WTC11 (cell line): ENCODE measurements at regions of chr19 and their contacts with region 1.

Region 1: DNA sequence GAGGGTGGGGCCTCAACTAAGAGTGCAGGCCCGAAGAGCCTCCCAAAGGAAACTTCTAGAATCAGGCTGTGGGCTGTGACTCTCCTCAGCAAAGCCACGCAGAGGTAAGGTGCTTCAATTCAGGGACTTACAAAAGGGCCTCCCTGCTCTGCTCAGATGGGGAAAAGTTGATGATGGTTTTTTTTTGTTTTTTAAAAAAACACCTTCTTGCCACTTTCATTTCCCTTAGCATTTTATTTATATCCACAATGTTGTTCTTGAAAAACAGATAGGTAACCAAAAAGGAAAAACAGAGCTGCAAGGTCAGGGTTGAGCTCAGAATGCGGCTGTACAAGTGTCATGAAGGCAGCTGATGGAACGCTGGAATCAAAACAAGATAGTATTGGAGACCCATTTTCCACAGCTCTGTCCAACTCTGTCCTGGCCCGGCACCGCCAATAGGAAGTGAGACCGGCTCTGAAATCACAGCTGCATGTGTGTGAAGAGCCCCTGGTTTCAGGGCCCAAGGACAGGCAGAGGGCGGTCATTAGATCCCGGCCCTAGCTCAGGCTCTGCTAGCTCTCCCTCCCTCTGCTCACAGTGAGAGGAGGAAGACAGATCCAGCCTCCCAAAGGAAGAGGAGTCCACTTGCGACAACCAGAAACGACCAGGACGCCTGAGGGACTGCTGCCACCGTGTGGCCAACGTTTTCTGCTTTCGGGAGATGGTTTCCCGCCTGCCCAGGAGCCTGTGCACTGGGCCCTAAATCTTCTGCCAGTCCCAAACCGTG is 58.3 kb downstream of the KLF2 start:
- DNase-seq: peak; percentile 86
- ATAC-seq: peak; percentile 93
- H3K4me3 Mint-ChIP-seq: no peak overlapping the region
- H3K27ac Mint-ChIP-seq: 0 out of 2 replicates have a peak overlapping the region, but pooled peaks have one; percentile 23
- H3K4me1 Mint-ChIP-seq: no peaks in the 10 kb centered on the region
- H3K27me3 Mint-ChIP-seq: no peaks in the 10 kb centered on the region
- CTCF ChIP-seq: peak; percentile 66

Region 2: DNA sequence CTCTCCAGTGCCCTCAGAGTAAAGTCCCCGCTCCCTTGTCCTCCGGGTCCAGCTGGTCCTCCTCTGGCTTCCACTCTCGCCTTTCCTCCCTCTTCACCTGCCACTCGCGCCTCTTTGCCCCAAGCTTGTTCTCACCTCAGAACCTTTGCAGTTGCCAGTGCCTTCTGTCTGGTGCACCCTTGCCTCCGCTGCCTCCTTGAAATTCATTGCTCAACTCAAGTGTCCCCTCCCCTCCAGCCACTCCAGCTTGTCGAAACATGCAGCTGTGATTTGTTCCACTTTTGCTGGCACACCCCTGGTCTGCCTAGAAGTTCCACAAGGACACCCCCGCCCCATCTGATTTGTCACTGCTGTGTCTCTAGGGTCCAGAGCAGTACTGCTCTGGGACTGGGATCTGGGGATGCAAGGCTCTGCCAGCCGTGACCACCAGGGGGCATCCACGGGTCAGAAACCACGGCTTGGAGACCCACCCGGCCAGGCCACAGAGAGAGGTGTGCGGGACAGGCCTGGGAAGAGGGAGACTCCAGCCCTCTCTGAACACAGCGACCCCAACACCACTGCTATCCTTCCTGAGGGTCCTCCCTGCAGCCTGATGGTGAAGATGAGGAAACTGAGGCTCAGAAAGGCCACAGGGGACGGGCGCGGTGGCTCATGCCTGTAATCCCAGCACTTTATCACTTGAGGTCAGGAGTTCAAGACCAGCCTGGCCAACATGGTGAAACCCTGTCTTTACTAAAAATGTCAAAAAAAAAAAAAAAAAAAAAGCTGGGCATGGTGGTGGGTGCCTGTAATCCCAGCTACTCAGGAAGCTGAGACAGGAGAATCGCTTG is 135.4 kb before region 1 on chr19:
- CTCF ChIA-PET with region 1: interaction called, 92 read pairs
- POLR2A ChIA-PET with region 1: no interaction called
- DNase-seq: peak; percentile 95
- ATAC-seq: peak; percentile 99
- H3K4me3 Mint-ChIP-seq: no peak overlapping the region
- H3K27ac Mint-ChIP-seq: 0 out of 2 replicates have a peak overlapping the region, but pooled peaks have one; percentile 48
- H3K4me1 Mint-ChIP-seq: no peaks in the 10 kb centered on the region
- H3K27me3 Mint-ChIP-seq: no peaks in the 10 kb centered on the region
- CTCF ChIP-seq: peak; percentile 80

Region 3: GRCh38 chr19:16252459-16253205 is 130.3 kb before region 1 on chr19:
- CTCF ChIA-PET with region 1: interaction called, 92 read pairs
- POLR2A ChIA-PET with region 1: no interaction called
- DNase-seq: no peak
- ATAC-seq: no peak
- H3K4me3 Mint-ChIP-seq: no peak overlapping the region
- H3K27ac Mint-ChIP-seq: no peak overlapping the region
- H3K4me1 Mint-ChIP-seq: no peaks in the 10 kb centered on the region
- H3K27me3 Mint-ChIP-seq: no peaks in the 10 kb centered on the region
- CTCF ChIP-seq: no peak

Region 4: DNA sequence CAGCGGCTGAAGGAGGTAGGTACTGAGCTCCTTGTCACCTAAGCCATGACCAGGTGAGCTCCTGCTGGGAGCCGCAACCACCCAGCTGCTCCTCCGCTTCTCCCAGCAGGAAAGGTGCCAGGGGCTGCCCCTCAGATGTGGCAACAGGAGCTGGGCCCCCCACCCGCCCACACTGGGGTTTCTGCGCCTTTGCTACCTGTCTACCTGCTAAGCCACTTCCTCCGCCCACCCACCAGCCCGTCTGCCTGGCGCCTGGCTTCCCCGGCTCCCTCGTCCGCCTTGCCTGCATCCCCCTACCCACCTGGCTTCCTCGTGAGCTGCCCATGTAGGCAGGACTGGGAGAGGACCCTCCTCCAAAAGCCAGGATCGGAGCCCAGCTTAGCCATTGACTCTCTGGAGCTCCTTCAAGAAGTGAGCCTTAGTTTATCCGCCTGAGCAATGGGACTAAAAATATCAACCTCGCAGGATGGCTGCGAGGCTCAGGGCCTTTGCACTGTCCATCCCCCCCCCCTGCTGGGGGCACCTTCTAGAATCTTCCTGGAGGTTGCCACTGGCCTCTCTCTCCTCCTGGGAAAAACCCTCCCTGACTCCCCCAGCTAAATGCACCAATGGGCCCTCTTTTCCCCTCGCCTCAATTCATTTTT is 114.2 kb before region 1 on chr19:
- CTCF ChIA-PET with region 1: interaction called, 12 read pairs
- POLR2A ChIA-PET with region 1: no interaction called
- DNase-seq: no peak
- ATAC-seq: no peak
- H3K4me3 Mint-ChIP-seq: no peak overlapping the region
- H3K27ac Mint-ChIP-seq: no peak overlapping the region
- H3K4me1 Mint-ChIP-seq: no peaks in the 10 kb centered on the region
- H3K27me3 Mint-ChIP-seq: no peaks in the 10 kb centered on the region
- CTCF ChIP-seq: no peak

Region 5: DNA sequence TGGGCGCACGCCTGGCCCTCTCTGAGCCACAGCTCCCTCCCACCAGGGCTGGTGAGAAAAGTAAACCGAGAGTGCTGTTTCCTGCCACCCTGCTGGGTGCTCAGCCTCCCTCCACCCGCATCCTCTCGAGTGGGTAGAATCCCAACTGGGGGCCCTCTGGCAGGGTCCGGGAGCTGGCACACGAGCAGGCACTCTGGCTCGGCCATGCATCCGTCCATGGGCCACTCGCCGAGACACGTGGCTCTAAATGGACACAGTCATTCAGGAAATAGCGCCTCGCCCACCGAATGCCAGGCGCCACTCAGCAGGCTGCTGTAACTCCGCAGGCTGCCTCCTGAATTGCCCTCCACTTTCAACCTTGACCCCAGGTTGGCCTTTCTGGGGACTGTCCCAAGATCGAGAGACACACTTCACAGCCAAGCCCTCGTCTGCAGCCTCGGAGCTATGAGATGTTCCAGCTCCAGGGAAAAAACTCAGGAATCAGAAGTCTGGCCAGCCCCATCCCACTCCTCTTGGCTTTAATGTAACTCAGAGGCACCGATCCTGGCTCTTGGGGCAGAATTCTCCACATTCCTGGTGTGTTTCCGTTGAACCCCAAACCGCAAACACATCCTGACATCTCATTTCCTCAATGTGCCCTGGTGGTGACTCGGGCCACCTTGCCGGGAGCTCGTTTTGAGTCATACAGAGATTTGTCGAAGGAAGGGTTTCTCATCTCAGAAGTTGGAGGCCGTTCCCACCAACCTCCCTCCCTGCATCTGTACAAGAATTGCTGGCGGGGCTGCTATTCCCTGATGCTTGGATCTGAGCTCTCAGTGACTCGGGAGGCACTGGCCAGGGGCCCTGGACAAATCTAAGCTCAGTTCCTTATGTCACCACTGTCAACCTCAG is 44.2 kb before region 1 on chr19:
- CTCF ChIA-PET with region 1: interaction called, 15 read pairs
- POLR2A ChIA-PET with region 1: no interaction called
- DNase-seq: no peak
- ATAC-seq: no peak; the same call in 1 of the 2 replicates
- H3K4me3 Mint-ChIP-seq: no peak overlapping the region
- H3K27ac Mint-ChIP-seq: no peak overlapping the region
- H3K4me1 Mint-ChIP-seq: peaks cover 5% of the 10 kb centered on the region
- H3K27me3 Mint-ChIP-seq: peaks cover 5% of the 10 kb centered on the region; the same call in 1 of the 2 replicates
- CTCF ChIP-seq: no peak

Region 6: GRCh38 chr19:16361254-16361653 is 21.7 kb before region 1 on chr19:
- CTCF ChIA-PET with region 1: interaction called, 12 read pairs
- POLR2A ChIA-PET with region 1: no interaction called
- DNase-seq: no peak
- ATAC-seq: no peak
- H3K4me3 Mint-ChIP-seq: no peak overlapping the region
- H3K27ac Mint-ChIP-seq: peak overlapping the region; percentile 36; the same call in 1 of the 2 replicates
- H3K4me1 Mint-ChIP-seq: peaks cover 10% of the 10 kb centered on the region
- H3K27me3 Mint-ChIP-seq: no peaks in the 10 kb centered on the region
- CTCF ChIP-seq: no peak

Region 7: GRCh38 chr19:16417660-16418596 is 35.0 kb after region 1 on chr19:
- CTCF ChIA-PET with region 1: interaction called, 12 read pairs
- POLR2A ChIA-PET with region 1: no interaction called
- DNase-seq: peak; percentile 85
- ATAC-seq: peak; percentile 95
- H3K4me3 Mint-ChIP-seq: no peak overlapping the region
- H3K27ac Mint-ChIP-seq: no peak overlapping the region
- H3K4me1 Mint-ChIP-seq: peaks cover 13% of the 10 kb centered on the region
- H3K27me3 Mint-ChIP-seq: no peaks in the 10 kb centered on the region
- CTCF ChIP-seq: peak; percentile 79